MCF 10A (cell line): ENCODE measurements at regions of chr1 and their contacts with region 1.

Region 1: DNA sequence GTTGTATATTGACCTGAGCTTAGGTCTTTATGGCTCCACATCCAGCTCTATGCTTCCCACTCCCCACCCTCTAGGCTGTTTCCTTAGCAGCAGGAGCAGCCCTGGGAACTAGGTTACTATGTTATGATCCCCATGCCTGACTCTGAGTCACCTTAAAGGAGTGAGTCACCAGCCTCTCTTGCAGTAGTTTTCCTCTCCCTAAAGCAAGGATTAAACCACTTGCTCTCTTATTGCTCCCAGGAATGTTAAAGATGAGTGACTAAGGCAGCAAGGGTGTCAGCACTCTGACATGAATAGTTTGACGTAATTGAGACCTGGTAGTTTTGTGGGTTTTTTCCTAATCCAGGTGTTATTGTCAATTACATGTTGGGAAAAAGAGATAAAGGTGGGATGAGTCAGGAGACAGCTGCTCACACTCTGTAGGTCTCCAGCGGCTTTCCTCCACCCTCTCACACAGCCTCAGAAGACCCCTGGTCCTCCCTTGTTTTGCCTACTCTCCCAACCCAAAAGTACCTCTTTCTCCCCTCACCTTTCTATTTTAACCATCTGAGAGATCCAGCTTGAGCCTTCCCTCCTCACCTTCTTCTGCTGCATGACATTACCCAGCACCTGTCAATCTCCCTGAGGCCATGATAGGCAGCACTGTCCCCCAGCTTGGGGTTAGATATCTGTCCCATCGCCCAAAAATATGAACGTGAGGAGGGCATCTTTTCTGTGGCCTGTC is 369.1 kb upstream of the VAMP3 start:
- DNase-seq: peak; percentile 99
- H3K4me3 Mint-ChIP-seq: no peak overlapping the region
- H3K27ac Mint-ChIP-seq: peak overlapping the region; percentile 93
- H3K4me1 Mint-ChIP-seq: peaks cover 19% of the 10 kb centered on the region
- H3K27me3 Mint-ChIP-seq: no peaks in the 10 kb centered on the region
- CTCF ChIP-seq: no peak

Region 2: GRCh38 chr1:7265771-7266648 is 136.0 kb before region 1 on chr1:
- CTCF ChIA-PET with region 1: no interaction called
- POLR2A ChIA-PET with region 1: no interaction called
- intact Hi-C with region 1: loop called (anchors 5 kb)
- DNase-seq: peak; percentile 98
- H3K4me3 Mint-ChIP-seq: peak overlapping the region; percentile 41
- H3K27ac Mint-ChIP-seq: peak overlapping the region; percentile 80
- H3K4me1 Mint-ChIP-seq: peaks cover 43% of the 10 kb centered on the region
- H3K27me3 Mint-ChIP-seq: no peaks in the 10 kb centered on the region
- CTCF ChIP-seq: no peak

Region 3: DNA sequence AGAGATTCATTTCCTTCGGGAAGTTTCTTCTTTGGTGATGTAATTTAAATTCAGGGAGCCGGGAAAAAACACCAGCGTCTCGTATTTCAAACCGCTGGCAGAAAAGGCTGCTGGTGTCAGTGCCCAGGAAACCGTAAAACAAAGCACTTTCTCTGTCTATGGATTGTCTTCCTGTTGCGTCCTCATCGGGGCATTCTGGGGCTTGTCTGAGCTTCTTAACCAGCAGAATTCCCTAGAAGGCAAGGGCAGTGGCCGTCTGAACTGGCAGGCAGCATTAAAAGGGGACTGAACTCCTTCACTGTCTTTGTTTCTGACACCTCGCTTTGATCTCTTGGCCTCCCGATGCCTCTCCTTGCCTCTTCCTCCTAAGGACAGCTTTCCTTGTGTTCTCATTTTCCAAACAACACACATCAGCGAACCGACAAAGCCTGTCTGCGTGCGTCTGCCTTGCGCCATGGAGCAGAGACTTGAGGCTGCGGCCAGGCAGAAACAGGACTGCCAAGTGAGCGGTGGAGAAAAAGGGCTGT is 22.5 kb before region 1 on chr1:
- CTCF ChIA-PET with region 1: no interaction called
- POLR2A ChIA-PET with region 1: no interaction called
- intact Hi-C with region 1: no loop called
- DNase-seq: peak; percentile 66
- H3K4me3 Mint-ChIP-seq: no peak overlapping the region
- H3K27ac Mint-ChIP-seq: no peak overlapping the region
- H3K4me1 Mint-ChIP-seq: peaks cover 11% of the 10 kb centered on the region
- H3K27me3 Mint-ChIP-seq: no peaks in the 10 kb centered on the region
- CTCF ChIP-seq: no peak